Endothelial cell of umbilical vein (primary cell): ENCODE measurements at regions of chr11 and their contacts with region 1.

Region 1: DNA sequence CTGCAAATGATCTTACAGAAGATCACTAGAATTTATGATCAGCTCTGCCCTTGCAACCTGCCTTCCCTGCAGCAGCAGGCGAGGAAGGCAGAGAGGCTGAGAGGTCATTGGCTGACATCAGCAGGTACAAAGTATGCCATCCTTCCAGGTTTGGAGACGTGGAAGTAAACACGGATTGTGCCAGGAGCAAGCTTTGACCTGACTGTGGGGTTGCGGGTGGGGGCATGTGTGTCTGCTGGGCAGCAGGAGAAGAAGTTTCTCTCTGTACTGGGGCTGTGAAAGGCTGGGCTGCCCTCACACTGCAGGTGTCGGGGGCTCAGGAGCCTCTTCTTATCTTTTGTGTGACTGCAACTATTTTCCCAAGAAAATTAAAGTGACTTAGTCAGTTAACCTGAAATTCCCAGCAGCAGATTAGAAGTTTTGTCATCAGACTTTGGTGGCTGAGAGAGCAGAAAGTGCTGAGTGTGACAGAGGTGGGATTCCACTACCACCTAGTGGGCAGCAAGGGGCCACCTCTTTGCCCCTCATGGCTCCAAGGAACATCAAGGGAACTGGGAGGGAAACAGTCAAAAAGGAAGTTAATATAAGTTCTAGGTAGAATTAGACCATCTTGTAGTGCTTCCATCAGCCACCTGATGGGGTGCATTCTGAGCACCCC is 565.9 kb downstream of the ETS1 start:
- DNase-seq: no peak
- H3K4me3 ChIP-seq: no peak overlapping the region
- H3K27ac ChIP-seq: no peak overlapping the region
- H3K4me1 ChIP-seq: peaks cover 13% of the 10 kb centered on the region
- H3K27me3 ChIP-seq: peaks cover 0 to 1% of the 10 kb centered on the region in 2 experiments
- CTCF ChIP-seq: peak; percentile 21 to 27
- POLR2A ChIP-seq: no peak

Region 2: DNA sequence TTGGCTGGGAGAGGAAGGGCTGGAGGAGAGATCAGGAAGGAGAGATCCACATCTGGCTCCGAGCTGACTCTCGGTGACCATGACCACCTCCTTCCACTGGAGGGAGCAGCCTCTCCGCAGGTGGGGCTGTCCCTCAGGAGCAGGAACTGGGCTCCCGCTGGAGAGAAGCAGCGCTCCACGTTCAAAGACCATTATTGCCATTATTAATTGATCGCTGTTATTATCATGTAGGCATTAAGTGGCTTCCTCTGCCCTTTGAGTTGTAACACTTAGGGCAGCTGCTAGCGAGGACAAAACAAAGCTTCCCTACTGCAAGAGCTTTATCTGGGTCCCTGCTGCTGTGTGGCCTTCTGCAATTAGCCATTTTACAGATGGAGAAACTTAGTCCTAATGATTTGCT is 1414.1 kb before region 1 on chr11:
- CTCF ChIA-PET with region 1: no interaction called
- POLR2A ChIA-PET with region 1: no interaction called
- dilution Hi-C with region 1: no loop called
- intact Hi-C with region 1: loop called (anchors 5 kb)
- DNase-seq: peak; percentile 5
- H3K4me3 ChIP-seq: no peak overlapping the region
- H3K27ac ChIP-seq: no peak overlapping the region
- H3K4me1 ChIP-seq: no peaks in the 10 kb centered on the region
- H3K27me3 ChIP-seq: no peaks in the 10 kb centered on the region
- CTCF ChIP-seq: peak; percentile 42 to 61
- POLR2A ChIP-seq: no peak

Region 3: DNA sequence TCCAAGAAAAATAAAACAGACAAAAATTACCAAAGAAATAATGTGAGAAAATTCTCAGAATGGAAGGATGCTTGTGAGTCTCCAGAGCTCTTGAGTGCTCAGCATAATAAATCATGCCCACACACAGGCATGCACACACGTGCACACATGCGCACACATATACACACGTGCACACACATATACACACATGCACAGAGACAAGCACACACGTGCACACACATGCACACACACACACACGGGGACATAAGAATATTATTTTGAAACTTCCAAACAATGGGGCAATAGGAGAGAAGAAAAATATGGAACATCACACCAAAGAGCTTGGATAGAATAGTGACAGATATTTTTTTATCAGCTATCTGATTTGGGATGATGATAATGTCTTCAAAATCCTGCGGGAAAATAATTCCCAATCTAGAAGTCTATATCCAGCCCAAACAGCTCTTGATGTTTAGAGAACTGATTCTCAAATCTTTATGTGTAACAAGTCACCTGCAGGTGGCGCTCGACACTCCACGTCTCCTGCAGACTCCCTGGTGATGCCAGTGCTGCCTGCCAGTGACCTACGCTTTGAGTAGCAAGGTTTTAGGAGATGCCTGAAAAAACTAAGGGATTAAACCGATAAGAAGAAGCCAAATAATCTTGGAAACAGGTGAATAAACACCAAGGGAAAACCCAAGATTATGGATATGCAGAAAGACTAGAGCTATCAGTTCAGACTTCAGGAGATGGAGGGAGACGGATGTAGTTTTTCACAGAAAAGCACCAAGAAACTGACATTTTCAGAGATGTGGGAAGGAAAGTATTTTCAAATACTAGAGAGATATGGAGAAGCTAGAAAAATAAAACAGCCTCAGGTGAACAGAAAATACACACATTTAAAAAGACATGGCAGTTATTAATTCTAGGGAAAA is 177.7 kb before region 1 on chr11:
- CTCF ChIA-PET with region 1: interaction called, 3 read pairs
- POLR2A ChIA-PET with region 1: no interaction called
- dilution Hi-C with region 1: no loop called
- intact Hi-C with region 1: loop called (anchors 1 kb)
- DNase-seq: peak; percentile 54
- H3K4me3 ChIP-seq: no peak overlapping the region
- H3K27ac ChIP-seq: no peak overlapping the region
- H3K4me1 ChIP-seq: no peaks in the 10 kb centered on the region
- H3K27me3 ChIP-seq: no peaks in the 10 kb centered on the region
- CTCF ChIP-seq: peak; percentile 74 to 75
- POLR2A ChIP-seq: no peak

Region 4: GRCh38 chr11:127996825-127997224 is 24.7 kb before region 1 on chr11:
- CTCF ChIA-PET with region 1: no interaction called
- POLR2A ChIA-PET with region 1: no interaction called
- dilution Hi-C with region 1: no loop called
- intact Hi-C with region 1: no loop called
- DNase-seq: no peak
- H3K4me3 ChIP-seq: no peak overlapping the region
- H3K27ac ChIP-seq: no peak overlapping the region
- H3K4me1 ChIP-seq: no peaks in the 10 kb centered on the region
- H3K27me3 ChIP-seq: no peaks in the 10 kb centered on the region
- CTCF ChIP-seq: no peak
- POLR2A ChIP-seq: no peak

Region 5: DNA sequence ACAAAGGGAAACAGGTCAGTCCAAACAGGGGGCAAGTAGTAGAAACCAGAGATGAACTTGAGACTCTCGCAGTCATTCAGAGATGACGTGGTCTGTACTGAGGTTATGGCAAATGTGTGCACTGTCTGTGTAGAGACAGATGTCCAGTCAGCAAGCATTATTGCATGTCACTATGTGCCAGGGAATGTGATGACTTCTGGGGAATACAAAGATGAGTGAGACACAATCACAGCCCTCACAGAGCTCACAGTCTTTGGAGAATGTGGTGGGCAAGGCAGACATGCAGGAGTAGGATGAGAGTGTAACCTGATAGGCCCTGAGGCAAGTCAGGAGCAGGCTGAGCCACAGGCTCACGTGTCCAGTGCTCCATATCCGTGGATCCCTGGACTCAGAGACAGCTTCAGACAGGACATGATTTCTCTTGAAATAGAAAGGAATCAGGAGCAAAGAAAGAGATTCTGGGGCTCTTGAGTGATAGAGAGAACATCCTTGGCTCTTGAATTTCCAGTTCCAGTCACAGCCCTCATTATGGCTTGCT is 15.1 kb after region 1 on chr11:
- CTCF ChIA-PET with region 1: no interaction called
- POLR2A ChIA-PET with region 1: no interaction called
- dilution Hi-C with region 1: no loop called
- intact Hi-C with region 1: no loop called
- DNase-seq: no peak
- H3K4me3 ChIP-seq: no peak overlapping the region
- H3K27ac ChIP-seq: no peak overlapping the region
- H3K4me1 ChIP-seq: peaks cover 14% of the 10 kb centered on the region
- H3K27me3 ChIP-seq: no peaks in the 10 kb centered on the region
- CTCF ChIP-seq: no peak
- POLR2A ChIP-seq: no peak

Region 6: DNA sequence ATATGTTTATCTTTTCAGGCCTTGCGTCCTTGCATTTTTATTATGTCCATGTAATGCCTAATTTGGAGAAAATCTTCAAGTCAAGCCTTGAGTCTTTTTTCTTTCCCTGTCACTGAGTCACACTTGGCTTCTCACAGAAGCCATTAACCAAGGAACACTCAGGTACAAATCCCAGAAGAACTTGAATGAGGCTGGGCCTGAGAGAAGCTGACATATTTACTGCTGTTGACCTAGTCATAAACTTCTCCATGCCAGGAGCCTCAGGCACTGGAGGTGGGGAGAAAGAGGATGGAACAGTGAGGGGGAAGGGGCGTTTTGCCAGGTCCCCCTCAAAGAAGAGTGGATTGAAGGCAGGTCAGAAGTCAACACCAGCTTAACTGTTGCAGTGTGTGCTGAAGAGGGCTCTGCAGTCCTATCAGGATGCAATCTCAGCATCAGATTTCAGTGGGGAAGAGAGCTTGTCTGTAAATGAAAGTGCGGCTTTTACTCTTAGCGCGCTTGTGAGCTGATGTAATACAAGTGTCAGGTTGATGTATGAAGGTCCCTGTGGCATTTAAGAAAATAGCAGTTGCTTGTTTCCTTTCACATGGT is 39.9 kb after region 1 on chr11:
- CTCF ChIA-PET with region 1: no interaction called
- POLR2A ChIA-PET with region 1: no interaction called
- dilution Hi-C with region 1: no loop called
- intact Hi-C with region 1: no loop called
- DNase-seq: no peak
- H3K4me3 ChIP-seq: no peak overlapping the region
- H3K27ac ChIP-seq: no peak overlapping the region
- H3K4me1 ChIP-seq: no peaks in the 10 kb centered on the region
- H3K27me3 ChIP-seq: no peaks in the 10 kb centered on the region
- CTCF ChIP-seq: no peak
- POLR2A ChIP-seq: no peak